ENCODE measurements at regions of chr17 and their contacts with region 1.

Region 1: DNA sequence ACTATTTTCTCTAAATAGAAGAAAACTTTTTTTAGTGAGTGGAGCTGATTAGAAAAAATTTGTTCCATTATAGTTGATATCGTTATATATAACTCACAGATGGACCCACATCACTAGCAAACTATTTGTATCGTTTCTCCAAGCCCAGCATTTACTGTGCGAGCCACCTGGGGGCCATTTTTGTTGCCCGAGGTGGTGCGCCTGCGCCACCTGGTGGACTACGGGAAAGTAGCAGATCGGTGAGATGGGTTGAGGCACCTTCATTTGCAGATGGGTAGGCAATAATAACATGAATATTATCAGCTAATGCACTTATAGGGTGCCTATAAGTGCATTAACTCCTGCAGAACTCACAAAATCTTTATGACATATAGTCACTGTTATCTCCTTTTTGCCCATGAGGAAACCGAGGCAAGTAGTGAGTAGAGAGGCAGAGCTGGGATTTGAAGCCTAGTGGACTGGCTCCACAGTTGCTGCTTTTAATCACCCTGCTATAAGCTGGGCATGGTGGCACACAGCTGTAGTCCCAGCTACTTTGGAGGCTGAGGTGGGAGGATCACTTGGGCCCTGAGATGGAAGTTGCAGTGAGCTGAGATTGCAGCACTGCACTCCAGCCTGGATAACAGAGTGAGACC is 23.2 kb upstream of the NTN1 start:
- DNase-seq: peak in 5 of 6 donors; percentile 27 to 84 (median 71)
- ATAC-seq: peak; percentile 59 to 77 (median 71)
- H3K4me3 ChIP-seq: no peak overlapping the region
- H3K27ac ChIP-seq: no peak overlapping the region
- H3K4me1 ChIP-seq: no peaks in the 10 kb centered on the region
- H3K27me3 ChIP-seq: no peaks in the 10 kb centered on the region
- CTCF ChIP-seq: peak; percentile 68 to 86 (median 74)

Region 2: GRCh38 chr17:8288336-8289102 is 709.6 kb before region 1 on chr17 and contains the start of gene RANGRF:
- intact Hi-C with region 1: no loop called
- DNase-seq: peak; percentile 86 to 94 (median 90)
- ATAC-seq: peak; percentile 87 to 94 (median 88)
- H3K4me3 ChIP-seq: peak within 1 kb of the TSS; percentile 41 to 80 (median 53)
- H3K27ac ChIP-seq: peak within 1 kb of the TSS; percentile 51 to 88 (median 76)
- H3K4me1 ChIP-seq: peaks cover 17 to 37% (median 20%) of the 10 kb centered on the region in 3 donors
- H3K27me3 ChIP-seq: no peaks in the 10 kb centered on the region
- CTCF ChIP-seq: no peak
- total RNA-seq, gene RANGRF: 2.8 to 14.5 (median 6.6) TPM

Region 3: GRCh38 chr17:9044772-9045470 is 46.8 kb after region 1 on chr17:
- intact Hi-C with region 1: no loop called
- DNase-seq: no peak
- ATAC-seq: no peak
- H3K4me3 ChIP-seq: no peak overlapping the region
- H3K27ac ChIP-seq: no peak overlapping the region
- H3K4me1 ChIP-seq: no peaks in the 10 kb centered on the region
- H3K27me3 ChIP-seq: no peaks in the 10 kb centered on the region
- CTCF ChIP-seq: no peak

Region 4: DNA sequence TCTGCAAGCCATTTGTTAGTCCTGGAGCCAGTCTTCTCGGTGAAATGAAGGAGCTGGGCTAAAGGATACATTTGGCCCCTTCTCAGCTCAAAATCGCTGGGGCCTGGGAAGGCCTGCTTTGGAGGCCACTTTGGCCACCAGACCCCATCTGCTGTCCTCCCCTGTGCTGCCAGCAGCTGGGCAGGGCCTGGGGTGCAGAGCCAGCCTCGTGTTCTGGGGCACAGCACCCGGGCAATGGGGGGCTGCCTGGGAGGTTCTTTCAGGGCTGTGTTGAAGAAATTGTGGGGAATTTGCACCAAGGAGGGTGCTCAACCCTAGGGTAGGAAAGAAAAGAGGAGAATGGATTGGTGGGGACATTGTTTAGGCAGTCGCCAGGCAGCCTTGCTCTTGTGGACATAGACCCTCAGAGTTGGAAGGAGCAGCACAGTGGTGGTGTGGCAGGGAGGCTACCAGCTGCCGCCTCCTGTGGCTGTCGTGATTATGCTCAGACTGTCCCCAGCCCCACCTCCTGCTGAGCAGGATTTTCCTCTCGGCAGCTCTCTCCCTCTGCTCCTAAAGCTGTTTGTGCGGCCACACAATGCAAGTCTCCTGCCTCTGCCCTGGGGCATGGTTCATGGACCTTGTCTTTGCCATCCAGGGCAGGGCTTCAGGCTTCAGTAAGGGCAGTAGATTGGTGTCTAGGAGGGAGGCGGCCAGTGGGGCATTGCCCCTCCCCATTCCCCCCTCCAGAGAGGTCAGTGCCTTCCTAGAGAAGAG is 198.0 kb after region 1 on chr17:
- intact Hi-C with region 1: no loop called
- DNase-seq: no peak
- ATAC-seq: peak in 3 of 4 donors; percentile 56 to 70 (median 70)
- H3K4me3 ChIP-seq: no peak overlapping the region
- H3K27ac ChIP-seq: no peak overlapping the region
- H3K4me1 ChIP-seq: no peaks in the 10 kb centered on the region
- H3K27me3 ChIP-seq: no peaks in the 10 kb centered on the region
- CTCF ChIP-seq: no peak

Region 5: DNA sequence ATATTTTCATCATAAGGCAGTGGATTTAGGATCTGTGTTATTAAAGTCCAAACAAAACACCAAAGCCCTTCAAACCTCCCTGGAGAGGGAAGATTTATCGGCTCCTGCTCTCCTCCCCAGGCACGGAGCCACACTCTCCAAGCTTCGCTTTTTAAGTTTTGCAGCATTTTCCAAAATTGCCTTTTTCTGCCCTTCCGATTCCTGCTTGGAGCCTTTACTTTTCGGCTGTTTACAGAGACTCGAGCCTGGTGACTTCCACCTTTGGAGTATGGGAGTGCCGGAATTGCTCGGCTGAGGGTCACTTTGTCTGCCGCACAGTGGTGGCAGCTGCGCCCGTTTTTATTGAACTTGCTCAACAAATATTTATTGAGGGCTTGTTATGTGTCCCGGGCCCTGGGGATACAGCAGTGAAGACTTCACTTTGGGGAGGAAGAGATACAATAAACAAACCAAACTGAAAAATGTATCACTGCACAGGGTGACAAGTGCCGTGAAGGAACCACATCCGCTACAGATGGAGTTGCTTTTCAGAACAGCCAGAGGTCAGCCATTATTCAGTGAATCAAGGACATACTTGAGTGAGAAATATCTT is 208.7 kb after region 1 on chr17:
- intact Hi-C with region 1: no loop called
- DNase-seq: no peak
- ATAC-seq: peak in 2 of 4 donors; percentile 18 to 37
- H3K4me3 ChIP-seq: no peak overlapping the region
- H3K27ac ChIP-seq: no peak overlapping the region
- H3K4me1 ChIP-seq: no peaks in the 10 kb centered on the region
- H3K27me3 ChIP-seq: no peaks in the 10 kb centered on the region
- CTCF ChIP-seq: no peak

Region 6: DNA sequence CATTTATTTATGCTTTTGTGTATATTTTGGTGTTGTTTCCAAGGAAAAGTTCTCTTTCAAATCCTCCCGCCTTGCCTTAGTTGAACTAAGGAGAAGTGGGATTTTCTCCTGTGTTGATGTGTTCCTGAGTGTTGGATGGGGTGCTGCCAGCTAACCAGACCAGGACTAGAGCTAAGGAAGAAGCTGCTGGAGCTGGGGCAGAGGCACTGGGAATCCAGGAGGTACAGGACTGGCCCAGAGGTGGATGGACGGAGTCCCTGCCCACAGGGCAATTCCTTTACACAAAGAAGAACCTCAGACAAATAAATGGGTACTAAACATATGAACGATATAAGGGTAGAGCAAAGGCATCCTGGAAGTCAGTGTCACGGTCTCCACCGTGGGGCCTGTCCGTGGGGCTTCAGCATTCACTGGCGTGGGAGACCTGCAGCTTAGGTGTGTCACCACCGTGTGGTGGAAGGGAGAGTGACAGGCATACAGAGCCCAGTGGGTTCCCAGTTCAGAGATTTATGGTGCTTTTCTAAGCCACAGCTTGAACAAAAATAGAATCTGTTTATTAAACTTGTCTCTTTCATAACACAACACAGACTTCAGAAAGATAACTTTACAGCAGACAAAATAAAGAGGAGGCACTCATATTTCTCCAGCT is 293.9 kb after region 1 on chr17:
- intact Hi-C with region 1: loop called in 1 of 3 experiments (anchors 5 kb)
- DNase-seq: peak in 4 of 6 donors; percentile 16 to 68 (median 38)
- ATAC-seq: peak in 3 of 4 donors; percentile 90 to 96 (median 93)
- H3K4me3 ChIP-seq: no peak overlapping the region
- H3K27ac ChIP-seq: no peak overlapping the region
- H3K4me1 ChIP-seq: no peaks in the 10 kb centered on the region
- H3K27me3 ChIP-seq: no peaks in the 10 kb centered on the region
- CTCF ChIP-seq: peak; percentile 27 to 67 (median 58)

Measured in pancreas (tissue), 10 donors.